Activated T-helper 1 cell treated with anti-CD3 and anti-CD28 coated beads, Interleukin-12 subunit alpha, Interleukin-12 subunit beta, Interleukin-2, Interleukin-4 antibody, amounts not matched to agents 30 ng/mL and 10 ng/mL and 1 ng/mL, durations not matched to agents 14 hours and 24 hours and 36 hours (primary cell): ENCODE measurements at regions of chr5 and their contacts with region 1.

Region 1: GRCh38 chr5:77030097-77031071 is at the start of gene AGGF1:
- DNase-seq: peak; percentile 87
- H3K4me3 Mint-ChIP-seq: peak within 1 kb of the TSS; percentile 90
- H3K27ac Mint-ChIP-seq: peak within 1 kb of the TSS; percentile 86
- H3K4me1 Mint-ChIP-seq: peaks cover 29% of the 10 kb centered on the region
- H3K27me3 Mint-ChIP-seq: peaks cover 4% of the 10 kb centered on the region
- total RNA-seq, gene AGGF1: 26.2 and 30.4 TPM in 2 replicates

Region 2: DNA sequence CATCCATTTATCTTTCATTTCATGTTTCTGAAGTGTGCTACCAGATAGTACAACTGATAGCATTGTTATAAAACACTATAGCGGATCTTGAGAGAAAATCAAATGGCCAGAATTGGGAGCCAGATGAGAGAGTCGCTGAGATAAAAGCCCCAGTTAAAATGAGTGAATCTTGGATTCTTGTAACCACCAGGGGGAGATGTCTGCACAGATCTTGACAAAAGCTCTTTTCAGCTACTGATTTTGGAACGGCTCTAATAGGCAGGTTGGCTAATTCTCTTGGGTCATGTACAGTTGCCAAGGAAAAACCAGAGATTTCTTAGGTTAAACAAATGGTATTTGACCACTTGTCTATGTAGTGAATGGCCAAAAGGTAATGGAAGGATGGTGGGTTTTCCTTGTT is 428.9 kb before region 1 on chr5:
- intact Hi-C with region 1: loop called (anchors 10 kb)
- DNase-seq: no peak
- H3K4me3 Mint-ChIP-seq: no peak overlapping the region
- H3K27ac Mint-ChIP-seq: no peak overlapping the region
- H3K4me1 Mint-ChIP-seq: peaks cover 25% of the 10 kb centered on the region
- H3K27me3 Mint-ChIP-seq: no peaks in the 10 kb centered on the region

Region 3: DNA sequence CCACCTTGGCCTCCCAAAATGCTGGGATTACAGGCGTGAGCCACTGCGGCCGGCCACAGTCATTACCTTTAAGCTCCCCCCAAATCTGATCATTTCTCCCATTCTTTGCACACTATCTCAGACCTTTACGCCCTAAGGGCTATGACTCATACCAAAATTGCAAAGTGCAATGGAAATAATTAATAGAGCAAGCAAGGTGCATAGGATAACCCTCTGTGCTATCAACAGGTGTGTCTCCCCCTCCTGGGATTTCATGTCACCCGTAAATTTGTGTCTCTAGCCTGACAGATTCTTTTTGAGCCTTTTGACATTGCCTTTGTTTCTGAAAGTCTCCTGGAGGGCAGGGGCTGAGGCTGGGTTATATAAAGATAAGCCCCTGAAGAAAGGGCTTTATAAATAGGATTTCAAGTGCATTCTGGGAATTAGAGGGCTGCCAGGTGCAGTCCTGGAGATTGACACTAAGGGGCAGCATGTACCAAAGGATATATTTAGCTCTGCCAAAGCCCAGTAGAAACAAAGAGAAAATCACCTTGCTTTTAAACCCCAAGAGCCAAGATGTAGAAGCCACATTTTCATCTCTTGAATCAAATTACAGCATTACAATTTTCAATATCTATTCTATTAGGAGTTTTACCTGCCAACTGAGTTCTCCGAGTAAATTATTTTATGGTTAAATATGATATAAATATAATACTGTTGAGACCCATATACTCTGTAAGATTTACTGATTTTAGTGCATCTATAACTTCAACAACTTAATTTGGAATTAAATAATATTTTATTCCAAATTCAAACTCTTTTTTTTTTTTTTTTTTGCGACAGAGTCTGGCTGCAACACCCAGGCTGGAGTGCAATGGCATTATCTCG is 162.3 kb before region 1 on chr5:
- intact Hi-C with region 1: loop called (anchors 5 kb)
- DNase-seq: peak; percentile 50
- H3K4me3 Mint-ChIP-seq: no peak overlapping the region
- H3K27ac Mint-ChIP-seq: no peak overlapping the region
- H3K4me1 Mint-ChIP-seq: peaks cover 5% of the 10 kb centered on the region
- H3K27me3 Mint-ChIP-seq: peaks cover 2% of the 10 kb centered on the region

Region 4: GRCh38 chr5:77076961-77077823 is 46.8 kb after region 1 on chr5:
- intact Hi-C with region 1: loop called (anchors 2 kb)
- DNase-seq: peak; percentile 46
- H3K4me3 Mint-ChIP-seq: peak overlapping the region; percentile 61
- H3K27ac Mint-ChIP-seq: no peak overlapping the region
- H3K4me1 Mint-ChIP-seq: no peaks in the 10 kb centered on the region
- H3K27me3 Mint-ChIP-seq: peaks cover 3% of the 10 kb centered on the region

Region 5: GRCh38 chr5:78294248-78295034 is 1264.1 kb after region 1 on chr5 and contains the start of gene AP3B1:
- intact Hi-C with region 1: loop called (anchors 2 kb)
- DNase-seq: peak; percentile 98
- H3K4me3 Mint-ChIP-seq: peak within 1 kb of the TSS; percentile 90
- H3K27ac Mint-ChIP-seq: peak within 1 kb of the TSS; percentile 96
- H3K4me1 Mint-ChIP-seq: peaks cover 50% of the 10 kb centered on the region
- H3K27me3 Mint-ChIP-seq: peaks cover 20% of the 10 kb centered on the region
- total RNA-seq, gene AP3B1: 40.8 and 40.9 TPM in 2 replicates